Endothelial cell of umbilical vein (primary cell): ENCODE measurements at regions of chr21 and their contacts with region 1.

Region 1: GRCh38 chr21:14864211-14865021 is 200.4 kb downstream of the NRIP1 start:
- DNase-seq: peak; percentile 67
- H3K4me3 ChIP-seq: no peak overlapping the region
- H3K27ac ChIP-seq: no peak overlapping the region
- H3K4me1 ChIP-seq: peaks cover 4% of the 10 kb centered on the region
- H3K27me3 ChIP-seq: no peaks in the 10 kb centered on the region
- CTCF ChIP-seq: peak; percentile 51 to 75
- POLR2A ChIP-seq: no peak

Region 2: GRCh38 chr21:14306151-14306907 is 558.1 kb before region 1 on chr21:
- CTCF ChIA-PET with region 1: interaction called, 3 read pairs
- POLR2A ChIA-PET with region 1: no interaction called
- dilution Hi-C with region 1: no loop called
- intact Hi-C with region 1: loop called (anchors 1 kb)
- DNase-seq: peak; percentile 43
- H3K4me3 ChIP-seq: no peak overlapping the region
- H3K27ac ChIP-seq: peak overlapping the region; percentile 10
- H3K4me1 ChIP-seq: peaks cover 8% of the 10 kb centered on the region
- H3K27me3 ChIP-seq: no peaks in the 10 kb centered on the region
- CTCF ChIP-seq: no peak
- POLR2A ChIP-seq: no peak

Region 3: DNA sequence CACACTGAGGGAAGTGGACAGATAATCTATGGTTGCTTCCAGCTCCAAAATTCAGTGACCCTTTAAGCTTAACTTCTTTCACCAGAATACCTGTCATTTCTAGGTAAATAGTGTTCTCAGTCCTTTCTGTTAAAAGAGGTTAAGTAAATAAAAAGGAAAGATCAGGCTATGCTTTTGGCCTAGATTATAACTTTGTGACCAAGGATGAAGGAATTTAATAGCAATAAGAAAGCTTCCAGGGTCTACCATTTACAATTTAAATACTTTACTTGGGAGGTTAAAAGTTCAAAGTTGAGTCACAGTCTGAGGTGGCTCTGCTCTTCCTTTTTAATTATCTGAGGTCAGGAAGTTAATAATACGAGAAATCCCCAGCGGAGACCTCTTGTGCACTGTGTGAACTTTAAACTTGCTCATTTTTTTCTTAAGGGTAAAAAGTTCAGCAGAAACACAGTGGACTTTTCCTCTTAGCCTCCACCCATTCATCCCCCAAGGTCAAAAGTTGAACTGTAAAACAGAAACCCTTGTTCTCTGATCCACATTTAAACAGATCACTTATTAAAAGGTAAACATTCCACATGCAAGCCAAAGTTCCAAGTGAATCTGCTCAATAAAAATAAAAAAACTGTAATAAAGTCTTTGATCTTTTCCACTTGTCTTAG is 13.3 kb after region 1 on chr21:
- CTCF ChIA-PET with region 1: interaction called, 33 read pairs
- POLR2A ChIA-PET with region 1: no interaction called
- dilution Hi-C with region 1: no loop called
- intact Hi-C with region 1: no loop called
- DNase-seq: peak; percentile 75
- H3K4me3 ChIP-seq: no peak overlapping the region
- H3K27ac ChIP-seq: peak overlapping the region; percentile 58
- H3K4me1 ChIP-seq: peaks cover 47% of the 10 kb centered on the region
- H3K27me3 ChIP-seq: no peaks in the 10 kb centered on the region
- CTCF ChIP-seq: no peak
- POLR2A ChIP-seq: no peak

Region 4: DNA sequence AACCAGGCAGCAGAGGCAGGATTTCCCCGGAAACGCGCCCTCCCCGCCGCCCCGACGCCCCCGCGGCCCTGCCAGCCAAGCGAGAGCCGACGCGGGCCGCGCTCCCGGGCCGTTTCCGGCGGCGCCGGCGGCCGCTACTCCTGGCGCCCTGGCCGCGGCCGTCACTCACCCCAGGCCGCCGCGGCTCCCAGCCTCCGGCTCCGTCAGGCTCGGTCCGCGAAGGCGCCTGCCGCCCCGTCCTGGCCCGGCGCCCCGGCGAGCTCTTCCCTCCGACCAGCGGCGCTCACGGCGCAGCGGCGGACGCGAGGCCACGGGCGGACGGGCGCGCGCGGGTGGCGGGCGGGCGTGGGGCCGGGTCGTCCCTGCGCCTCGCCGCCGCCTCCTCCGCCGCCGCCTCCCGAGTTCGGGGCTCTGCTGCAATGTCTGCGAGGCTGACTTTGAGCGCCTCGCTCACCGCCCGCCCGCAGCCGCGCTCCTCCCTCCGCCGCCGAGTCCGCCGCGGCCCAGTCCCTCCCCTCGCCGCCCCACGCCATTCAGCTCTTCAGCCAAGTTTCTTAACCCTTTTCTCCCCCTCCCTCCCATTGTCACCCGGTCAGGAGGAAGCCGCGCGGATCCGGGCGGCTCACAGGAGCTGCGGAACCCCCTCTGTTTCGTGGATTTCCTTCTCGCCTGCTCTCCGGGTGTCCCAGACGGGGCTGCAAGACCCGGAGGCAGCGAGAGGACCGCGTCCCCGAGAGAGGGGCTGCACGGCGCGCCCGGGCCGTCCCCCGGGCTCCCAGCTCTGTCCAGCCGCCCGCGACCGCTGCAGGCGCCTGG is 200.4 kb after region 1 on chr21 and contains the start of gene NRIP1:
- CTCF ChIA-PET with region 1: interaction called, 29 read pairs
- POLR2A ChIA-PET with region 1: interaction called, 4 read pairs
- dilution Hi-C with region 1: no loop called
- intact Hi-C with region 1: loop called (anchors 1 kb)
- DNase-seq: peak; percentile 92
- H3K4me3 ChIP-seq: peak within 1 kb of the TSS; percentile 80 to 96 (median 92)
- H3K27ac ChIP-seq: peak within 1 kb of the TSS; percentile 95
- H3K4me1 ChIP-seq: peaks cover 30% of the 10 kb centered on the region
- H3K27me3 ChIP-seq: peaks cover 0 to 3% of the 10 kb centered on the region in 2 experiments
- CTCF ChIP-seq: no peak
- POLR2A ChIP-seq: peak; percentile 66
- total RNA-seq, gene NRIP1: 24.0 and 26.6 TPM in 2 replicates

Region 5: DNA sequence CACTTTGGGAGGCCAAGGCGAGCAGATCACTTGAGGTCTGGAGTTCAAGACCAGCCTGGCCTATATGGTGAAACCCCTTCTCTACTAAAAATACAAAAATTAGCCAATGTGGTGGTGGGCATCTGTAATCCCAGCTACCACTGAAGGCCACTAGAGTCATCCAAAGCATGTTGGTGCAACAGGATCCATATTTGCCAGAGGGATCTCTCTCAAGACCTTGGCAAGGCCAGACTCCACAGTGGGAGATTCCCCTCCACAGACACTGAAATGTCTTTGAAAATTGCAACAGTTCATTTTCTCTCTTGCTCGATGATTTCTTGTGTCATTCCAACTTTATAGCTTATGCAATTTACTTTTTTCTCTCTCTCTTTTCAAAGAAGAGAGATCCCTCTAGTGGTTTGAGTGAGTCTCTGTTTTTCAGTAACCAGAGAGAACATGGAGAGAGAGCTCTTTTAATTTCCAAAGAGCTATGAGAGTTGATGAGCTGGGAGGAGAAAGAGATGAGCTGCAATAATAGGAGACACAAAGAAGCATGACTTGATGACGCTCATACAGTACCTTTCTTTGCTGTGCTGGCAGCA is 688.6 kb after region 1 on chr21:
- CTCF ChIA-PET with region 1: interaction called, 17 read pairs
- POLR2A ChIA-PET with region 1: no interaction called
- dilution Hi-C with region 1: no loop called
- intact Hi-C with region 1: no loop called
- DNase-seq: no peak
- H3K4me3 ChIP-seq: no peak overlapping the region
- H3K27ac ChIP-seq: no peak overlapping the region
- H3K4me1 ChIP-seq: no peaks in the 10 kb centered on the region
- H3K27me3 ChIP-seq: peaks cover 2 to 5% of the 10 kb centered on the region in 2 experiments
- CTCF ChIP-seq: peak in 1 of 2 donors; percentile 20
- POLR2A ChIP-seq: no peak